Heart left ventricle (tissue), 16 donors: ENCODE measurements at regions of chr9 and their contacts with region 1.

Region 1: DNA sequence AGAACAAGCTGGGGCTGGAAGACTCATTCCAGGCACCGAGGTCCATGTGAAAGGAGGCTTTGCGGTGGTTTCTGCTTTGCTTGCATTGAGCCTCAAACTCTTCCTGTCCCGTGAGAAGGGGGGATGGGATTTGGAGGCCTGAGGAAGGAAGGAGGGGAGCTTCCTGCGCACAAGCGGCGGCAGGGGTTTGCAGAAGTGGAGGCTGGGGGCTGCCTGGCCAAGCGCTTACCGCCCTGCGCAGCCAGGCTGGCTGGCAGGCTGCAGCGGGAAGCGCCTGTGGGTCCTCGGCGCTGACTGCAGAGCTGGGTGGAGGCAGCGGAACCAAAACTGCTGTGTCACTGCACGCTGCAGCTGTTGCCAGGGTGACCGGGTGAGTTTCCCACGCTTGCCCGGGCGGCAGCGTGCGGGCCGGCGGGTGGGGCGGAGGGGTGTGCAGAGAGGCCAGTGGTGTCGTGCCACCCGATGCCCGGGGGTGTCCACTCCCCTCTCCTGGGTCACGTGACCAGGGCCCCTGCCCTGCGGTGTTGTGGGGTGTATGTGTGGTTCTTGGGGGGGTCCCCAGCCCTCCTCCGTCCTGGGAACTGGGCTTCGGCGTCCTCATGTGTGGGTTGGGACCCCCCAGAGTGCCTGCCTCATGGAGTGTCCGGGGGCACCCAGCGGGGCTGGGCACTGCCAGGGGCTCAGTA is 81.0 kb downstream of the RXRA start:
- DNase-seq: peak; percentile 93 to 96 (median 95)
- ATAC-seq: peak; percentile 65 to 81 (median 76)
- H3K4me3 ChIP-seq: peak overlapping the region in 10 of 12 donors; percentile 20 to 43 (median 34)
- H3K27ac ChIP-seq: peak overlapping the region; percentile 14 to 94 (median 82)
- H3K4me1 ChIP-seq: peaks cover 65 to 100% (median 95%) of the 10 kb centered on the region in 12 donors
- H3K27me3 ChIP-seq: no peaks in the 10 kb centered on the region
- CTCF ChIP-seq: no peak
- POLR2A ChIP-seq: peak in 1 of 2 donors; percentile 50

Region 2: GRCh38 chr9:134059661-134060395 is 347.4 kb before region 1 on chr9:
- intact Hi-C with region 1: no loop called
- DNase-seq: peak in 2 of 5 donors; percentile 39 to 66
- ATAC-seq: peak in 1 of 4 donors; percentile 3
- H3K4me3 ChIP-seq: no peak overlapping the region
- H3K27ac ChIP-seq: peak overlapping the region in 1 of 12 donors; percentile 32
- H3K4me1 ChIP-seq: peaks cover 13 to 99% (median 79%) of the 10 kb centered on the region in 12 donors
- H3K27me3 ChIP-seq: no peaks in the 10 kb centered on the region
- CTCF ChIP-seq: no peak
- POLR2A ChIP-seq: no peak

Region 3: DNA sequence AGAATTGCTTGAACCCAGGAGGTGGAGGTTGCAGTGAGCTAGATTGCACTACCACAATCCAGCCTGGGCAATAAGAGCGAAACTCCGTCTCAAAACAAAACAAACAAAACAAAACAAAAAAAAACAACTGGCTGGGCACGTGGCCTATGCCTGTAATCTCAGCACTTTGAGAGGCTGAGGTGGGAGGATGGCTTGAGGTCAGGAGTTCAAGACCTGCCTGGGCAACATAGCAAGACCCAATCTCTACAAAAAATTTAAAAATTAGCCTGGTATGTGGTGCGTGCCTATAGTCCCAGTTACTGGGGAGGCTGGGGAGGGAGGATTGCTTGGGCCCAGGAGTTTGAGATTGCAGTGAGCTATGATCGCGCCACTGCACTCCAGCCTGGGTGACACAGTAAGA is 294.7 kb before region 1 on chr9:
- intact Hi-C with region 1: no loop called
- DNase-seq: no peak
- ATAC-seq: no peak
- H3K4me3 ChIP-seq: no peak overlapping the region
- H3K27ac ChIP-seq: no peak overlapping the region
- H3K4me1 ChIP-seq: no peaks in the 10 kb centered on the region
- H3K27me3 ChIP-seq: no peaks in the 10 kb centered on the region
- CTCF ChIP-seq: no peak
- POLR2A ChIP-seq: no peak

Region 4: DNA sequence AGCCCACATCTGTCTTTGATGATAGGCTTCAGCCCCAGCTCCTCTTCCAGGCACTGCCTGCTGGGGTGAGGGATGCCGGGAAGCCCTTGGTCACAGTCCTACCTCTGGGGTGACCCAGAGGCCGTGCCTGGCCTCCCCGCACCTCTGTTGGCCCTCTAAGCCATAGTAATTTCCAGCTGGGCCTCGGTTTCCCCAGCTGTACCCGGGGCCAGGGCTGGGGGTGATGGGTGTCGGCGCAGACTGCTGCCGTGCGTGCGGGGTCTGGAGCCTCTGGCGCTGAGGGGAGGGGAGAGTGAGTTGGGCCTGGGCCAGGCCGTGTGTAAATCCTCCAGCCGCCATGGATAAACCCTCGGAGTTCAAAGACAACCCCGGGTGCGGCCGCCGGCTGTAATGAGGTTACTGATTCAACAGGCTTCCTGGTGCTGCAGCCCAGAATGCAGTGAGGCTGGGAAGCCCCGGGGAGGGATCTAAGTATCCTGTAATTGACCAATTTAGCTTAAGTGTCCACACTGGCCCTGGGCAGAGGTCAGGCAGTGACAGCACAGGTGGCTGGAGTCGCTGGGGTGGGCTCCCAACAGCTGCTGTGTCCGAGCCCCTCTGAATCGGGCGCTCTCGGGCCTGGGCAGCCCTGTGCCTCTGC is 73.9 kb before region 1 on chr9:
- intact Hi-C with region 1: loop called in 4 of 10 experiments (anchors 2 to 10 kb)
- DNase-seq: peak in 1 of 5 donors; percentile 45
- ATAC-seq: peak in 1 of 4 donors; percentile 13
- H3K4me3 ChIP-seq: peak overlapping the region in 3 of 12 donors; percentile 7 to 17 (median 15)
- H3K27ac ChIP-seq: peak overlapping the region in 8 of 12 donors; percentile 3 to 89 (median 48)
- H3K4me1 ChIP-seq: peaks cover 48 to 100% (median 98%) of the 10 kb centered on the region in 12 donors
- H3K27me3 ChIP-seq: no peaks in the 10 kb centered on the region
- CTCF ChIP-seq: no peak
- POLR2A ChIP-seq: no peak

Region 5: DNA sequence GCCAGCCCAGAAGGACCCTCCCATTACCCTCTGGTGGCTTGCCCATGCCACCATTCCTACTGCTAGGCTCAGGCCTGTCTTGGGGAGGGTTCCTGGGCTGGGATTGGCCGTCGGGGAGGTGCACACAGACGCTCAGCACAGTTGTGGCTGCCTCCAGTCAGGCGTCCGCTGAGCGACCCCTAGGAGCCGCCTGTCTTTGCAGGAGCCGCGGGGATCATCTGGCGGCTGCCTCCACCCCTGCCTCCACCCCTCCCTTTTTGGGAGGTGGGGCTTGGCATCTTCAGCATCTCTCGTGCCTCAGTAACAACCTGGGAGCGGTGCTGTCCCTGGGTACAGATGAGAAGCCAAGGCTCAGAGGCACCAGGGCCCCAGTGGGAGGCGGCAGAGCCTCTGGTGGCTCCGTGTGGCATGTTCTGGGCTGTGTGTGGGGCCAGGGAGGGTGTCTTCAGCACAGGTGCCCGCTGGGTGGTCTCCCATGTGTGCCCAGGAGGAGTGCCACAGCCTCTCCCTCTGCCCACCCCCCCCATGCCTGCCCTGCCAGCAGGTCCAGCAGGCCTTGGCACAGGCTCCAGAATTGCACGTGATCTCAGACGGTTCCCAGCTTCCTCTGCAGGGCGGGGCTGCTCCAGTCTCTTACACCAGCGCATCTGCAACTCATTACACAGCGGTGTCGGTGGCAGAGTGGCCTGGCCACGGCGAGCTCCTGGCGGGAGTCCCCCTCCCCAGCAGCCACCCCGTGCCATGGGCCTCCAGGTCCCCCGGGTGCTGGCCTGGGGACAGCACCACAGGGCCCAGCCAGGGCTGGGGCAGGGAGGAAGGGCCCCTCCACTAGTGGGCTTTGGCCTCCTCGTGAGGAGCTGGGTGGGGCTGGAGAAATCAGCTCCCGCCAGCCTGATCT is 41.2 kb before region 1 on chr9:
- intact Hi-C with region 1: loop called in 3 of 10 experiments (anchors 2 to 5 kb)
- DNase-seq: peak; percentile 89 to 96 (median 91)
- ATAC-seq: peak; percentile 83 to 90 (median 86)
- H3K4me3 ChIP-seq: peak overlapping the region in 9 of 12 donors; percentile 9 to 37 (median 23)
- H3K27ac ChIP-seq: peak overlapping the region in 11 of 12 donors; percentile 45 to 93 (median 80)
- H3K4me1 ChIP-seq: peaks cover 15 to 92% (median 68%) of the 10 kb centered on the region in 12 donors
- H3K27me3 ChIP-seq: no peaks in the 10 kb centered on the region
- CTCF ChIP-seq: peak in 4 of 12 donors; percentile 12 to 38 (median 26)
- POLR2A ChIP-seq: peak in 1 of 2 donors; percentile 49

Region 6: DNA sequence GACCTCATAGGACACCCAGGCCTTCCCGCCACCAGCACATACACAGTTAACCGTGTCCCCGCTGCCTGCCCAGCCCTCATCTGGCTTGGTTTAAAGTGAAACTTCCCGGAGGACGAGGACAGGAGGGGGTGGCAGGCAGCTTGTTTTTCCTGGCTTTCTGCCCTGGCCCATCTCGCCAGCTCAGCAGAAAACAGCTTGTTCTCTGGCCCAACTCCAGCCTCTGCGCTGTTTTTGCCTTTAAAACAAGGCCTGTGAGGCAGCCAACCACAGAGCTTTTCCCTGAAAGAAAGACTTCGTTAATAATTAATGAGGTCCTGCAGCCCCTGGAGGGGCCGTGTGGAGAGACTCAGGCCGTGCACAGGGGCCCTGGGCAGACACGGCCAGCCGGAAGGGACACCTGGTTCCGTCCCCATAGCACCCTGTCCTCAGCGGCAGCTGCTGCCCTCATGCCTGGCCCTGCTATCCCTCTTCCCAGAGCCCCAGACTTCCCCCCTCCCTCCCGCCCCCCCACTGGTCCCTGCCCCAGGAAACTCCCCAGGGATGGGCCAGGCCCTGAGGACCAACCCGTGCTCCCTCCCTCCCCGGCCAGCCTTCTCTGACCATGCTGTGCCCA is 27.7 kb after region 1 on chr9:
- intact Hi-C with region 1: loop called in 1 of 10 experiments (anchors 2 kb)
- DNase-seq: peak; percentile 94 to 98 (median 96)
- ATAC-seq: peak; percentile 81 to 89 (median 83)
- H3K4me3 ChIP-seq: peak overlapping the region in 7 of 12 donors; percentile 0 to 29 (median 11)
- H3K27ac ChIP-seq: peak overlapping the region; percentile 70 to 91 (median 84)
- H3K4me1 ChIP-seq: peaks cover 4 to 88% (median 58%) of the 10 kb centered on the region in 12 donors
- H3K27me3 ChIP-seq: no peaks in the 10 kb centered on the region
- CTCF ChIP-seq: no peak
- POLR2A ChIP-seq: no peak